ENCODE measurements at regions of chr6 and their contacts with region 1.

Region 1: GRCh38 chr6:37442416-37443215 is 9.6 kb downstream of the CMTR1 start:
- DNase-seq: no peak
- ATAC-seq: no peak
- H3K4me3 ChIP-seq: no peak overlapping the region
- H3K27ac ChIP-seq: no peak overlapping the region
- H3K4me1 ChIP-seq: no peaks in the 10 kb centered on the region
- H3K27me3 ChIP-seq: no peaks in the 10 kb centered on the region
- CTCF ChIP-seq: no peak
- POLR2A ChIP-seq: no peak
- RAD21 ChIP-seq: no peak

Region 2: DNA sequence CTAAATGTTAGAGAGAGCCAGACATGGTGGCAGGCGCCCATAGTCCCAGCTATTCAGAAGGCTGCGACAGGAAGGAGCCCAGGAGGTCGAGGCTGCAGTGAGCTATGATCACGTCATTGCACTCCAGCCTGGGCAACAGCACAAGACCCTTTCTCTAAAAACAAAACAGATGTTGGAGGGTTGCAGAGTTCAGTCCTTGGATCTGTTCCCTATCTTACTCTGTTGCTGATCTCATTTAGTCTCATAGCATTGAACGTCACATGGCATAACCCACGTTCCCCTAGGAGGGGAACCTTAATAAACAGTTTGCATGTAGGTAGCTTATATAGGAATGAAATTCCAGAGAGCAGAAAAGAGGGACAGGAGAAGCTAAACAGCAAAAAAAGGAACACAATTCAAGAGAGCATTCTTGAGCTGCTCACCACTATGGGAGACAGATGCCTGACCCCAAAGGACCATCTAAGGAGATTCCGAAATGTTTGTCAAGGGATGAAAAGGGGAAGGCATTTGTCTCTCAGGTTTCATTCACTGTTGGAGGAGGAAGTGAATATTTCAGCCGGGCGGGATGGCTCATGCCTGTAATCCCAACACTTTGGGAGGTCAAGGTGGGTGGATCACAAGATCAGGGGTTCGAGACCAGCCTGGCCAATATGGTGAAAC is 327.2 kb before region 1 on chr6:
- CTCF ChIA-PET with region 1: no interaction called
- POLR2A ChIA-PET with region 1: no interaction called
- dilution Hi-C with region 1: no loop called
- in situ Hi-C with region 1: no loop called
- intact Hi-C with region 1: no loop called
- DNase-seq: peak; percentile 62
- ATAC-seq: peak; percentile 51
- H3K4me3 ChIP-seq: no peak overlapping the region
- H3K27ac ChIP-seq: no peak overlapping the region
- H3K4me1 ChIP-seq: peaks cover 5% of the 10 kb centered on the region; the same call in 1 of the 2 replicates
- H3K27me3 ChIP-seq: peaks cover 2% of the 10 kb centered on the region; the same call in 1 of the 2 replicates
- CTCF ChIP-seq: no peak
- POLR2A ChIP-seq: no peak
- RAD21 ChIP-seq: no peak

Region 3: DNA sequence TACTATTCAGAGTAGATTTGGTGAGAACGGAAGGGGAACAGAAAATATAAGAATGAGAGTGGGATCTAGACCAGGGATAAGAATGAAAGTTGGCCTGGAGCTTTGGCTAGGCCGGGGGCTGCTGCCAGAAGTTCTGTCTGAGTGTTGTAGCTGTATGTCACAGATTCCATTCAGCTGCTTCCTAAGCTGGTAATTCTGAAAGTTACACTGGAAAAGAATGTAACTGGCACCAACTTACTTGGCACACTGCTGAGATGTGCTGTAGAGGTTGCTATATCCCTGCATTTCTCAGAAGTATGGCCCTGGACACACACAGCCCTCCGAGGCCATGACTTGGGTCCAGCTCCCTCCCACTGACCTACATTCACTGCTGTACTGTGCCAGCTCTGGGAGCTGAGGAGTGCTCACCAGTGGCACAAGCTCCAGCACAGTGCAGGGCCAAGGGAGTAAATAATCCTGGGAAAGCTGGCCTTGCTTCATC is 158.9 kb before region 1 on chr6:
- CTCF ChIA-PET with region 1: no interaction called
- POLR2A ChIA-PET with region 1: no interaction called
- dilution Hi-C with region 1: no loop called
- in situ Hi-C with region 1: no loop called
- intact Hi-C with region 1: no loop called
- DNase-seq: no peak
- ATAC-seq: peak; percentile 48
- H3K4me3 ChIP-seq: no peak overlapping the region
- H3K27ac ChIP-seq: no peak overlapping the region
- H3K4me1 ChIP-seq: peaks cover 27% of the 10 kb centered on the region
- H3K27me3 ChIP-seq: no peaks in the 10 kb centered on the region
- CTCF ChIP-seq: no peak
- POLR2A ChIP-seq: no peak
- RAD21 ChIP-seq: no peak

Region 4: GRCh38 chr6:37418722-37419121 is 23.9 kb before region 1 on chr6:
- CTCF ChIA-PET with region 1: no interaction called
- POLR2A ChIA-PET with region 1: interaction called, 21 read pairs
- dilution Hi-C with region 1: no loop called
- in situ Hi-C with region 1: no loop called
- intact Hi-C with region 1: no loop called
- DNase-seq: no peak
- ATAC-seq: no peak
- H3K4me3 ChIP-seq: no peak overlapping the region
- H3K27ac ChIP-seq: no peak overlapping the region
- H3K4me1 ChIP-seq: no peaks in the 10 kb centered on the region
- H3K27me3 ChIP-seq: peaks cover 2% of the 10 kb centered on the region
- CTCF ChIP-seq: no peak
- POLR2A ChIP-seq: no peak
- RAD21 ChIP-seq: no peak

Region 5: DNA sequence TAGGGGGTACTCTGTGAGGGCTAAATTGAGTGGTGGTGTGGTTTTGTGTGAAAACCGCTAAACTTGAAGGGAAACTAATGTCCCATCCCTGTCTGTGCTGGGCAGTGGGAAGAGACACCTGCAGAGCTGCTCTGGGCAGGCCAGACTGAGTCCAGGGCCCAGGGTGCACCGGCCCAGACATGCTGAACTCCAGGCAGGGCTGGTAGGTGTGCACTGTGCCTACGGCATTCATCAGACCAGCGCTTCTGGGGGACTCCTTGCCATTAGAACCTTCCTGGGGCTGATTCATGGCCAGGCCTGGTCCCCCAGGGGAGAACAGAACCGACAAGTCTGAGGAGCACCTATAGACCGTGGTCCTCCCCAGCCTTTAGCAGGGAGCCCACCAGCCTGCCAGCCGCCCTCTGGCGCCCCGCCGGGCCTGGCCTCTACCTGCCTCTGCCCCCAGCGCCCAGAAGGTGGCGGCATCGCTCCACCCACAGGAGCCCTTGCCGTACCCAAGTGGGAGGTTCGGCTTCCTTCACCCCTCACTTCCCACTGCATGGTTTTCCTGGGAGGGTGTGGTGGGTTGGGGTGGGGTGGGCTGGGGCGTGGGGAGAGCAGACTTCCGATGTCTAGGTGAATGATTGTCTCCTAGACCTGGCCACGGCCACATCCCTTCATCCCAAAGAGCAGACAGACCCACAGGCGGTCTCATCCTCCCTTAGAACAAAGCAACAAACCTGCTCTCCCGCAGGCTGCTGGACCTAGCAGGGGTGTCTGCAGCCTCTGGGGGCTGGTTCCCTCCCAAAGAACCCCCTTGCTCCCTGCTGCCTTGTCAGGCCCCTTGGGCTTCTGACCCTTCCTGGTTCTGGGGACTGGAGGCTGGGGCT is 41.5 kb after region 1 on chr6:
- CTCF ChIA-PET with region 1: no interaction called
- POLR2A ChIA-PET with region 1: no interaction called
- dilution Hi-C with region 1: no loop called
- in situ Hi-C with region 1: no loop called
- intact Hi-C with region 1: loop called (anchors 1 kb)
- DNase-seq: peak; percentile 29
- ATAC-seq: peak; percentile 94
- H3K4me3 ChIP-seq: no peak overlapping the region
- H3K27ac ChIP-seq: no peak overlapping the region
- H3K4me1 ChIP-seq: no peaks in the 10 kb centered on the region
- H3K27me3 ChIP-seq: no peaks in the 10 kb centered on the region
- CTCF ChIP-seq: peak; percentile 84
- POLR2A ChIP-seq: no peak
- RAD21 ChIP-seq: peak; percentile 89

Measured in IMR-90 (cell line).